ENCODE measurements at regions of chr9 and their contacts with region 1.

Region 1: GRCh38 chr9:19379697-19380046 is 364 bp downstream of the RPS6 start:
- DNase-seq: no peak
- H3K4me3 Mint-ChIP-seq: peak overlapping the region; percentile 91
- H3K27ac Mint-ChIP-seq: peak overlapping the region; percentile 97
- H3K4me1 Mint-ChIP-seq: peaks cover 37% of the 10 kb centered on the region
- H3K27me3 Mint-ChIP-seq: no peaks in the 10 kb centered on the region

Region 2: GRCh38 chr9:19009391-19009965 is 370.2 kb before region 1 on chr9:
- CTCF ChIA-PET with region 1: no interaction called
- intact Hi-C with region 1: no loop called
- DNase-seq: no peak
- H3K4me3 Mint-ChIP-seq: no peak overlapping the region
- H3K27ac Mint-ChIP-seq: no peak overlapping the region
- H3K4me1 Mint-ChIP-seq: no peaks in the 10 kb centered on the region
- H3K27me3 Mint-ChIP-seq: no peaks in the 10 kb centered on the region

Region 3: DNA sequence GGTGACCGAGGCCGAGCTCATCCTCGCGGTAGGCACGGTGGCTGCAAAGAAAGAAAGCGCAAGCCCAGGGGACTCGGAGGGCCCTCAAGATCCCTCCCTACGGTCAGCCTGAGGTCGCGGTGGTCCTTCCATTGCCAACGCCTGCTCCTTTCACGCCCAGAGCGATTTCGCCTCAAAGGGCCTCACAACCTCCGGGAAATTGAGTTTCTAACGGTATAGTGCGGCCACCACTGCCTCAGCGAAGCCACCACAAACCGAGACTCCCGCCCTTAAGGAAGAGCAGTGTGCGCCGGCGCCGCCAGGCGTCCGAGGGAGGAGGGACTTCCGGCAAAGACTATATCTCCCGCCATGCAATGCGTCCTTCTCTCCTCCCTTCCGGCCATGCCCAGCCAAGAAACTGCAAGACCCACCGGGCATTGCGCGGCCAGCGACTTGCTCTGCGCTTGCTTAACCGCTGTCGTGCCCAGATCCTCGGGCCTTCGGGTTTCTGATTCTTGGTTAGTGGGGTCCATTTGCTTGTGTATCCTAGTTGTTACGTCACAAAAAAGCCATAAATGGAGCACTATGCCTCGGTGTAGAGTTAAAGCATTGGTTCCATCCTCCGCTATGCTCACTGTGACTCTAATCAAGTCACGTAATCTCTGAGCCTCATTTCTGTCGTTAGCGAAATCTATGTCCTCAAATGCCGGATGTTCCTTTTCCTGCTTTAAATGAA is 276.9 kb before region 1 on chr9 and contains the start of gene HAUS6:
- CTCF ChIA-PET with region 1: no interaction called
- intact Hi-C with region 1: loop called (anchors 1 kb)
- DNase-seq: peak; percentile 97
- H3K4me3 Mint-ChIP-seq: peak within 1 kb of the TSS; percentile 94
- H3K27ac Mint-ChIP-seq: peak within 1 kb of the TSS; percentile 93
- H3K4me1 Mint-ChIP-seq: peaks cover 22% of the 10 kb centered on the region
- H3K27me3 Mint-ChIP-seq: no peaks in the 10 kb centered on the region
- total RNA-seq, gene HAUS6: 23.6 to 24.1 TPM

Region 4: GRCh38 chr9:19184144-19184917 is 195.3 kb before region 1 on chr9:
- CTCF ChIA-PET with region 1: no interaction called
- intact Hi-C with region 1: loop called (anchors 1 kb)
- DNase-seq: peak; percentile 92
- H3K4me3 Mint-ChIP-seq: peak overlapping the region; percentile 47
- H3K27ac Mint-ChIP-seq: peak overlapping the region; percentile 89
- H3K4me1 Mint-ChIP-seq: peaks cover 14% of the 10 kb centered on the region
- H3K27me3 Mint-ChIP-seq: no peaks in the 10 kb centered on the region

Region 5: DNA sequence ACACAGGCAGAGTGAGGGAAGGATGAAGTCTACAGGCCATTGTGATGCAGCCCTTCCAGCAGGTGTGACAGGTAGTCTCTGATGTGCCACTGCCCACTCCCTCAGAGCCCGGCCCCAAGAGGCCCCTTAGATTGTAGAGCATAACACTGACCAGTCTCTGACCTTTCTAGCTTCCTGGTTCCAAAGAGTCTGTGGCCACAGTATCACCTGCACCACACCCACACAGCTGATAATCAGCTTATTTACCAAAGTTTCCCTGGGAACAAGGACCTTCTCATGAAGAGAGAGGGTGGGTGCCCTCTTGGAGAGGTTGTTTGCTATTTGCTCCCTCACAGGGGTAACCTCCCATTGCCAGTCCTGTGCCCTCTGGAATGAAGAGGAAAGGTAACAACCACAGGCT is 18.2 kb after region 1 on chr9:
- CTCF ChIA-PET with region 1: no interaction called
- intact Hi-C with region 1: no loop called
- DNase-seq: no peak
- H3K4me3 Mint-ChIP-seq: no peak overlapping the region
- H3K27ac Mint-ChIP-seq: no peak overlapping the region
- H3K4me1 Mint-ChIP-seq: no peaks in the 10 kb centered on the region
- H3K27me3 Mint-ChIP-seq: no peaks in the 10 kb centered on the region

Region 6: GRCh38 chr9:19408693-19409400 is 29.2 kb after region 1 on chr9 and contains the start of gene ACER2:
- CTCF ChIA-PET with region 1: interaction called, 4 read pairs
- intact Hi-C with region 1: loop called (anchors 1 kb)
- DNase-seq: peak; percentile 94
- H3K4me3 Mint-ChIP-seq: peak within 1 kb of the TSS; percentile 87
- H3K27ac Mint-ChIP-seq: no peak within 1 kb of the TSS
- H3K4me1 Mint-ChIP-seq: peaks cover 14% of the 10 kb centered on the region
- H3K27me3 Mint-ChIP-seq: no peaks in the 10 kb centered on the region
- total RNA-seq, gene ACER2: 2.0 to 2.2 TPM